Activated CD4-positive, alpha-beta T cell treated with anti-CD3 and anti-CD28 coated beads for 36 hours (primary cell): ENCODE measurements at regions of chr9 and their contacts with region 1.

Region 1: GRCh38 chr9:99173570-99174504 is 47.9 kb downstream of the ALG2 start:
- DNase-seq: no peak
- ATAC-seq: peak; percentile 86
- H3K4me3 Mint-ChIP-seq: no peak overlapping the region
- H3K27ac Mint-ChIP-seq: no peak overlapping the region
- H3K4me1 Mint-ChIP-seq: peaks cover 5% of the 10 kb centered on the region
- H3K27me3 Mint-ChIP-seq: peaks cover 4% of the 10 kb centered on the region

Region 2: DNA sequence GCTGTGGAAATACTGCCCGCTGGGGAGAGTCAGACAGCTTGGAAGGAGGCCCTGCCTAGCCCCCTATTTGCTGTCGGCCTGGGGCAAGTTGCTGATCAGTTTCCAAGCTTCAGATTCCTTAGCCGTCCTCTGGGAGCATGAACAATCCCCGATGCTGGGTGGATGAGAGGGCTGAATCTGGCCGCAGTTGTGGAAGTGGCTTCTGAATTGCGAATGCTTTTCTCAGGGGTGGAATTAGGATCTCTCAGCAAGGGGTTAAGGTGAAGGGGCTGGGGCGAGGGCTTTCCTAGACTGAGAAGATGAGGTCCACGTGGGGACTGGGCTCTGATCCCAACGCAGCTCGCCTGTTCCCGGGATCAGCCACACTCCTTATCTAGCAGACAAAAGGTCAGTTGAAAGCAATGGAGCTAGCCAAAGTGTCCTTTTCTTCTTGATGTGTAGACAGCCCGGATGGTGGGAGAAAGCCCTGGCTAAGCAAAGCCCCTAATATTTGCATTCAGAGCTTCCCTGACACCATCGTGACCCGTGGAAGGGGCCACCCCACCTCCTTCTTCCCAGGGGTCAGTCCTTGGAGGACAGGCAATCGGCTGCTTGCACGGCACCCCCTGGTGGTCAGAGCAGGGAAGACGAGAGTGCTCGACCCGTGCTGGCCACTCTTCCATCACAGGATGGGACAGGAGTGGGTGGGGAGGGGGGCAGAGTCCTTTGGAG is 175.2 kb before region 1 on chr9:
- CTCF ChIA-PET with region 1: no interaction called
- POLR2A ChIA-PET with region 1: no interaction called
- intact Hi-C with region 1: no loop called
- DNase-seq: peak; percentile 79
- ATAC-seq: peak; percentile 75
- H3K4me3 Mint-ChIP-seq: no peak overlapping the region
- H3K27ac Mint-ChIP-seq: no peak overlapping the region
- H3K4me1 Mint-ChIP-seq: peaks cover 19% of the 10 kb centered on the region
- H3K27me3 Mint-ChIP-seq: no peaks in the 10 kb centered on the region

Region 3: DNA sequence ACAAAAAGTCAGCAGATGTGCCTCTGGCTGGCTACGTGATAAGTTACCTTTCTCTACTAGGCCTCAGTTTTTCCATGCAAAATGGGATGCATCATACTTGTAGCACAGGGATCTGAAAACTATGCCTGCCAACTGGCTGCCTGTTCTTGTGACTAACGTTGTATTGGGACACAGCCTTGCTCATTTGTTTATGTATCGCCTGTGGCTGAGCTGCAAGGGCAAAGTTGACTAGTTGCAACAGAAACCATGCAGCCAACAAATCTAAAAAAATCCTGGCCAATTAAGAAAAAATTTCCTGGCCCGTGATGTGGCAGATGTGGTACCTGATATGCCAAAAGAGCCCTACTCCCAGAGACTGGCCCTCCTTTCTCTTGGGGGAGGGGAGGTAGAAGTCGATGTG is 179.6 kb after region 1 on chr9:
- CTCF ChIA-PET with region 1: no interaction called
- POLR2A ChIA-PET with region 1: no interaction called
- intact Hi-C with region 1: no loop called
- DNase-seq: no peak
- ATAC-seq: no peak
- H3K4me3 Mint-ChIP-seq: no peak overlapping the region
- H3K27ac Mint-ChIP-seq: no peak overlapping the region
- H3K4me1 Mint-ChIP-seq: no peaks in the 10 kb centered on the region
- H3K27me3 Mint-ChIP-seq: peaks cover 2% of the 10 kb centered on the region

Region 4: GRCh38 chr9:100011062-100011681 is 837.3 kb after region 1 on chr9:
- CTCF ChIA-PET with region 1: no interaction called
- POLR2A ChIA-PET with region 1: no interaction called
- intact Hi-C with region 1: loop called in 1 of 2 experiments (anchors 5 kb)
- DNase-seq: peak; percentile 64
- ATAC-seq: peak; percentile 53
- H3K4me3 Mint-ChIP-seq: no peak overlapping the region
- H3K27ac Mint-ChIP-seq: no peak overlapping the region
- H3K4me1 Mint-ChIP-seq: no peaks in the 10 kb centered on the region
- H3K27me3 Mint-ChIP-seq: no peaks in the 10 kb centered on the region